B cell (primary cell): ENCODE measurements at regions of chr4 and their contacts with region 1.

Region 1: DNA sequence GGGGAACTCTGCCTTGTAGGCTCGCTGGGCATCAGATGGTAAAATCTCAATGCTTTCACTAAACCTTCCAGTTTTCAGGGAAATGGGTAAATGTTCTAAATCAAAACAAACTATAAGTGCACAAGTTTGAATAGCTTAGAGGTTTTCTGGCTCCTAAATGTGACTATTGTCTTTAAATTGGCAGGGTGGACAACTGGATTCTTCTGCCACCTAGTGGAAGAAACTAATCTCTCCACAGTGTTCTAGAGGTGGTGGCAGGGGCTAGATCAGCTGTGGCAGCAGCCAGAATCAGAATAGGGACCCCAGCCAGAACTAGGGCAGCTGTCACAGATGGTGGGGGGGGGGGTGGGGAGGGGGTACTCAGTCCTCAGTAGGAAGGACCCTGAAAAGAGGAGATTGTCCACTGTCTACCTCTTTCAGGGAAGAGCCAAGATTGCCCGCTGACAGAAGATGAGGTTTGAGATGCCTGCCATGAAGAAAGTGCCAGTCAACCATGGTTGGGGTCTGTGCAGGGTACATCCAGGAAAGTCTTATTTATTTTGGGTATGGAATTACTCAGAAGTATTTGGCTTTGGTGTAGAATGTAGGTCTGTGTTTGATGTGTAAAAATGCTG is 201.4 kb downstream of the CCNG2 start:
- DNase-seq: peak; percentile 31
- ATAC-seq: no peak
- H3K4me3 ChIP-seq: no peak overlapping the region
- H3K4me3 Mint-ChIP-seq: no peak overlapping the region
- H3K27ac ChIP-seq: no peak overlapping the region
- H3K27ac Mint-ChIP-seq: no peak overlapping the region
- H3K4me1 ChIP-seq: peaks cover 8 to 9% of the 10 kb centered on the region in 2 donors
- H3K4me1 Mint-ChIP-seq: peaks cover 14% of the 10 kb centered on the region
- H3K27me3 ChIP-seq: no peaks in the 10 kb centered on the region
- H3K27me3 Mint-ChIP-seq: no peaks in the 10 kb centered on the region
- CTCF ChIP-seq: peak; percentile 55

Region 2: DNA sequence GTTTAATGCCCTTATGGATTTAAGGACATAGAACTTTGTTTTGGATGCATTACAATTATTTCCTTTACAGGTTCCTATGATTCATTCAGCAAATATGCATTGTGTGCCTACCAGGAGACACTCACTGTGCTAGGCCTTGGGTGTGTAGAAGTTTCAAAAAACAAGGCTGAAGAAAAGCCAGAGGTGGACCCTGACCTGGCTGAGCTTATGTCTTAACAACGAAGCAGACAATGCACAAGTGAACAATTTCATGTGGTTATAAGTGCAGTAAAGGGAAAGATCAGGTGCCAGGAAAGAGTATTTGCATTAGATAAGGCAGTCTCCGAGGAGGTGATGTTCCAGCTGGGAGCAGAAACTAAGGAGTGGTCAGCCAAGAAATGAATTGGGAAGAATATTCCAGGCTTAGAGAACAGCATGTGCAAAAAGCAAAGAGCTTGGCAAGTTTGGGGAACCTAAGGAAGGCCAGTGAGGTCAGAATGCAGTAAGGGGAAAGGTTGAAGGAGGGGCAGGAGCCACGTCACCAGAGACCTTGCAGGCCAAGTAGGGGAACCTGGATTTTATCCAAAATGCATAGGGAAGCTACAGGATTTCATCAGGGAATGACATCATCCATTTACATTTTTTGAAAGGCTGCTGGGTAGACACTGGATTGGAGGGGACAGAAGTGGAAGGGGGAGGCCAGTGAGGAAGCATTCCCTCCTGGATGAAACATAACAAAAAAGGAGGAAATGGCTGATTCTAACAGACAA is 654.1 kb before region 1 on chr4:
- CTCF ChIA-PET with region 1: no interaction called
- POLR2A ChIA-PET with region 1: no interaction called
- intact Hi-C with region 1: no loop called
- DNase-seq: no peak
- ATAC-seq: no peak
- H3K4me3 ChIP-seq: no peak overlapping the region
- H3K4me3 Mint-ChIP-seq: no peak overlapping the region
- H3K27ac ChIP-seq: no peak overlapping the region
- H3K27ac Mint-ChIP-seq: no peak overlapping the region
- H3K4me1 ChIP-seq: no peaks in the 10 kb centered on the region
- H3K4me1 Mint-ChIP-seq: no peaks in the 10 kb centered on the region
- H3K27me3 ChIP-seq: no peaks in the 10 kb centered on the region
- H3K27me3 Mint-ChIP-seq: peaks cover 7% of the 10 kb centered on the region
- CTCF ChIP-seq: no peak

Region 3: DNA sequence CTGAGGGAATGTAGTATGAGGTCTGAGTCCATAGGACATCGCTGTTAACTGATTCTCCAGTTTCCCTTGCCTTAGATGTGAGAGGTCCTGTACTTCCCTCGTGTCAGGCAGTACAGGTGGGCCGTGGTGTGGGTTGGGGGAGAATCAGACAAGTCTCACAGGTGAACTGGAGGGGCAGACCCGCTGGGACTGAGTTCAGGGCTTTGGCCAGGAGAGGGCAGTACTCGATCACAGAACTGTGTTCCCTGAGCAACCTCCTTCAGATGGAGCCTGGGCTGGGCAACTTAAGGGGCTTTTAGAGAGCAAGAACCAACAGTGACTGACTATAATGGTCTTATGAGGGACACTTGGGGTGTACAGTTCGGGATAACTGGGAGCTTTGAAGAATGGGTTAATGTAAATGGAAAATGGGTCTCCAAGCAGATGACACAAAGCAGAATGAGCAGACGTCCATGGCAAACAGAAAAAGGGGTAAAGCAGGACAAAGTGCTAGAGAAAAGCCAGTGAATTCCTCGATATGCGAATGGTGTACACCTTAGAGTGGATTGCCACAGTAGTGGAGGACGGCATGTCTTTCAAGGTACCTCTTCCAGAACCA is 117.9 kb before region 1 on chr4:
- CTCF ChIA-PET with region 1: interaction called, 15 read pairs
- POLR2A ChIA-PET with region 1: no interaction called
- intact Hi-C with region 1: no loop called
- DNase-seq: peak; percentile 56
- ATAC-seq: peak; percentile 70
- H3K4me3 ChIP-seq: no peak overlapping the region
- H3K4me3 Mint-ChIP-seq: no peak overlapping the region
- H3K27ac ChIP-seq: no peak overlapping the region
- H3K27ac Mint-ChIP-seq: no peak overlapping the region
- H3K4me1 ChIP-seq: no peaks in the 10 kb centered on the region
- H3K4me1 Mint-ChIP-seq: no peaks in the 10 kb centered on the region
- H3K27me3 ChIP-seq: no peaks in the 10 kb centered on the region
- H3K27me3 Mint-ChIP-seq: peaks cover 11% of the 10 kb centered on the region
- CTCF ChIP-seq: peak; percentile 76

Region 4: GRCh38 chr4:77418333-77419038 is 60.1 kb after region 1 on chr4:
- CTCF ChIA-PET with region 1: interaction called, 10 read pairs
- POLR2A ChIA-PET with region 1: no interaction called
- intact Hi-C with region 1: no loop called
- DNase-seq: peak; percentile 18
- ATAC-seq: no peak
- H3K4me3 ChIP-seq: no peak overlapping the region
- H3K4me3 Mint-ChIP-seq: no peak overlapping the region
- H3K27ac ChIP-seq: no peak overlapping the region
- H3K27ac Mint-ChIP-seq: no peak overlapping the region
- H3K4me1 ChIP-seq: no peaks in the 10 kb centered on the region
- H3K4me1 Mint-ChIP-seq: no peaks in the 10 kb centered on the region
- H3K27me3 ChIP-seq: no peaks in the 10 kb centered on the region
- H3K27me3 Mint-ChIP-seq: peaks cover 1% of the 10 kb centered on the region
- CTCF ChIP-seq: no peak

Region 5: DNA sequence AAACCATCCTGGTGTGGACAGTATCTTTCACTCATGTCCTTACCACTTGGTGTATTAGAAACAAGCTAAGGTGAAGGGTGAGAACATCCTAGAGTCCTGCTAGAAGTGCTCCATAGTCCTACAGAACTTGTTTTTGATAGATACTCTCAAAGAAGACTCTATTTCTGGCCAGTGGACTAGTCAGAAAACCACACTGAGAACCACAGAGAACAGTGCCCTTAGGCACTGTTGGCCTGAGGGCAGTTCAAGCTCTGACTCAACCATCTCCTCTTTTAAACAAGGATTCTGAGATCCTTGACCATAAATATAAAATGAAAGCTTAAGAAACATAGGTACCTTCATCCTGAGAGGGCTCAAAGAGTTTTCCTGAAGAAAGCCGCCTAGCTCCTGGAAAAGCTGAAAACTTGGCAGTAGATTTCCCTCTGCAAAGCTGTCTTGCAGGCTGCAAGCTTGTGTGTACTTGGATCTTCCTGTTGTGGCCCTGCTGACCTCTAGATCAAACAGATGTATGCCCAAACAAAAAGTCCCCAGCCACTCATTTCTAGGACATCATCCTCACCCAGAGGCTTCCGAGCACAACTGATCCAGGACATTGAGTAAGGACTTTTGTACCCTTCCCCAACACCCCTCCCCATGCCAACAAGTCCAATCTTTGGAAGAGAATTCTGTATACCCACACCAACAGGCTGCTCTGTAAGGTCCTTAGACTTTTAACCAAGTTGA is 135.6 kb after region 1 on chr4:
- CTCF ChIA-PET with region 1: no interaction called
- POLR2A ChIA-PET with region 1: no interaction called
- intact Hi-C with region 1: no loop called
- DNase-seq: no peak
- ATAC-seq: peak; percentile 33
- H3K4me3 ChIP-seq: no peak overlapping the region
- H3K4me3 Mint-ChIP-seq: no peak overlapping the region
- H3K27ac ChIP-seq: no peak overlapping the region
- H3K27ac Mint-ChIP-seq: no peak overlapping the region
- H3K4me1 ChIP-seq: peaks cover 8 to 12% of the 10 kb centered on the region in 2 donors
- H3K4me1 Mint-ChIP-seq: peaks cover 22% of the 10 kb centered on the region
- H3K27me3 ChIP-seq: no peaks in the 10 kb centered on the region
- H3K27me3 Mint-ChIP-seq: no peaks in the 10 kb centered on the region
- CTCF ChIP-seq: no peak